ENCODE measurements at regions of chr1 and their contacts with region 1.

Region 1: DNA sequence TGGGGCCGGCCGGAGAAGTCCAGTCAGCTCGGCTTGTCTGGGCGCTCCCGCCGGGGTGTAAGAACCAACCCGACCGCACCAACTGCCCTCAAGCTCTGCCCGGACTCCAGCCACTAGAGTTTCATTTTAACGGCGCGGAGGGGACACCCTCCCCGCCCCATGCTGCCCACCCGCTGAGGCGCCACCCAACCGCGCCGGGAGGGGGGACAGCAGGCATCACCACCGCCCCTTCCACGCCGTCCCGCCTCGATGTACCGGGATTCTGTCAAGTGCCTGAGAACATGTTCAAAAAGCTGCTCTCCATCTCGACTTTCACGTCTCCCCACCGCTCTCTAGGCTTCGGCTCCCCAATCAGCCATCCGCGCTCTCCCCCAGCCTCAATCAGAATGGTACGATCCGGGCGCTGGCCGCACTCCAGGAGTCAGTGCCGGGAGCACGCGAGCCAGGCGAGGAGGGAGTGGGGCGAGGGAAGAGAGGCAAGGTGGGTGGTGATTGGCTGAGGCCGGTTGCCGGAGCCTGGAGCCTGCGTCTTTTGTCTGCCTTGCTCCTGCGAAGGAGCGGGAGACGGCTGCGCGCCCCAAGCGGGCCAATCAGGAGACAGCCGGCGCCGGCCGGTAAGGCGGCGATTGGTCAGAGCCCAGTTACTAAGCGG is at the start of gene PIK3R3:
- DNase-seq: peak; percentile 90 to 99
- H3K4me3 ChIP-seq: peak within 1 kb of the TSS; percentile 71 to 83
- H3K27ac ChIP-seq: peak within 1 kb of the TSS; percentile 90 to 97
- H3K4me1 ChIP-seq: peaks cover 5 to 16% of the 10 kb centered on the region in 2 donors
- H3K27me3 ChIP-seq: no peaks in the 10 kb centered on the region
- CTCF ChIP-seq: peak in 2 of 3 experiments; percentile 10 to 18
- total RNA-seq, gene PIK3R3: 33.1 TPM

Region 2: DNA sequence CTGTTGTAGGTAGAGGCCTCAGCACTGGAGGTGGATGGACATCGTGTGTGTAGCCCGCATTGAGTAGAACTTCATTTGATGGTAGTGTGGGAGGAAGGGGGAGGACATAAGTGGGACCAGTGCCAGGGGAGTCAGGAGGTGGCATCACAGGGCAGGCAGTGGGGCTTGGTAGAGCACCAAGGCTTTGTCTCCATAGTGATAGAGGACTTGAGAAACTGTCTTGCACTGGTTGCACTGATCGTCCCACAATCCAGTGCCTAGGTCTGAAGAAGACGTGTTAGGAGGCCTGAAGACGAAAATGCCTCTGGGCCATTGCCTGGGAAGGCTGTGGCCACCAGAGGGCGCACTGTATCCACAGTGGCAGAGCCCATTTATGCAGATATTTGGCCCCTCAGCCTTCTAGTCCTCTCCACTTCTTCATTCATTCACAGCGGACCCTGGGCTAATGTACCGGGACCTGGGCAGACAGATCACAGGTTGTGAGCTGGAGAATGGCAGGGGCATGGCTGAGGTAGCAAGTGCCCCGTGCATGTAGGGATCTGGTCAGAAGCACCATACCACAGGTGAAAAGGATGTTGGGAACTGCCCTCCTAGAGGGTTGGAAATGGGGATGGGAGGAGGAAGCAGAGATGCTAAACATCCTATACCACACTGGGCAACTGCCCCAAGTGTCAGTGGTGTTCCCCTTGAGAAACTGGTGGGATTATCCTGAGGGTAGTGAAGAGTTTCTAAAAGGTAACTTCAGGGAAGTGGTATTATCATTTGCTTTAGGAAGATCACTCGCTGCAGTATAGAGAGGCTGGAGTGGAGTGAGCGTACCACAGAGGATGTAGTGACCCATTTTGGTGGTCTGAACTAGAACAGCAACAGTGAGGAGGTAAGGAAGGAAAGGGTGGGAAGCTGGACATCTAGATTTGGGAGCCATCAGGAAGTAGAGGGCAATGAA is 95.5 kb before region 1 on chr1:
- intact Hi-C with region 1: loop called (anchors 2 kb)
- DNase-seq: peak; percentile 33 to 93
- H3K4me3 ChIP-seq: no peak overlapping the region
- H3K27ac ChIP-seq: no peak overlapping the region
- H3K4me1 ChIP-seq: no peaks in the 10 kb centered on the region
- H3K27me3 ChIP-seq: no peaks in the 10 kb centered on the region
- CTCF ChIP-seq: peak; percentile 96 to 97 (median 96)

Measured in ascending aorta (tissue), 2 donors.